HCT116 (cell line): ENCODE measurements at regions of chr19 and their contacts with region 1.

Region 1: GRCh38 chr19:9584073-9584833 is at the start of gene ZNF121:
- DNase-seq: peak; percentile 77
- ATAC-seq: peak; percentile 83
- H3K4me3 ChIP-seq: peak within 1 kb of the TSS; percentile 72 to 73
- H3K27ac ChIP-seq: peak within 1 kb of the TSS; percentile 79
- H3K4me1 ChIP-seq: peaks cover 3 to 9% of the 10 kb centered on the region in 2 experiments; a peak in 2 of 4 replicates
- H3K27me3 ChIP-seq: no peaks in the 10 kb centered on the region
- CTCF ChIP-seq: no peak
- POLR2A ChIP-seq: peak; percentile 56
- RAD21 ChIP-seq: no peak
- total RNA-seq, gene ZNF121: 80.9 TPM

Region 2: DNA sequence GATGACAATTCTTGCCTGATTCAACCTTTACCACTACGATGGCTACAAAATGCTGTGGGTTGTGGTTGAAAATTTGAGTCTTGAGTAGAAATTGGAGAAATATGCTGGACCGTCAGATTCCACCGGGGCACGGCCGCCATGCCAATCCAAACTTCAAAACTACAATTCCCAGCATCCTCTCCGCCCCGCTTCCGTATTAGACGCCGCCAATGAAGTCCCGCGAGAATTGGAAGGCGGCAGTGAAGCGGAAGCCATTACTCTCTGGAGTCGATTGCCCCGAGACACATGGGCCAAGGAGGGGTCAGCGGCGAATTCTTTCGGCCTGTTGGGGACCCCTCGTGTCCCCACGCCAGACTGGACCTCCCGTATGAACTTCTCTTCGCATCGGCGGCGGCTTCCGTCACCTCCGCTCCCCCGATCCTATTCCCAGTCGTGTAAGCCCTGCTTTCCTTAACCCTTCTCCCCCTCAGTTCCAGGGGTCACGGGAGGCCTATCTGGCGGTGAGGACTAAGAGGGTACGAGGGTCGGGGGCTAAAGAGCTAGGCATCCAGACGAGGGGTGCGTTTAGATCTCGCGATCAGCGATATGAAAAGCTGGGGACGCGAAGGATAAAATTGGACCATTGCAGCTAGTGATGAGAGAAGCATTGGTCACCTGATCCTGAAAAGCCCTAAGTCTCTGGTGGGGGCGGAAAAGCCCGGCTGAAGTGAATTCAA is 443.9 kb before region 1 on chr19 and contains the start of gene ZNF317:
- CTCF ChIA-PET with region 1: no interaction called
- POLR2A ChIA-PET with region 1: no interaction called
- RAD21 ChIA-PET with region 1: no interaction called
- intact Hi-C with region 1: loop called (anchors 5 kb)
- DNase-seq: peak; percentile 84
- ATAC-seq: peak; percentile 88
- H3K4me3 ChIP-seq: peak within 1 kb of the TSS; percentile 90 to 99
- H3K27ac ChIP-seq: peak within 1 kb of the TSS; percentile 54
- H3K4me1 ChIP-seq: peaks cover 4 to 9% of the 10 kb centered on the region in 2 experiments; a peak in 2 of 4 replicates
- H3K27me3 ChIP-seq: no peaks in the 10 kb centered on the region
- CTCF ChIP-seq: no peak
- POLR2A ChIP-seq: peak; percentile 64
- RAD21 ChIP-seq: no peak
- total RNA-seq, gene ZNF317: 39.8 TPM

Region 3: GRCh38 chr19:9323919-9324583 is 260.2 kb before region 1 on chr19 and contains the start of gene ZNF559:
- CTCF ChIA-PET with region 1: no interaction called
- POLR2A ChIA-PET with region 1: no interaction called
- RAD21 ChIA-PET with region 1: no interaction called
- intact Hi-C with region 1: loop called (anchors 10 kb)
- DNase-seq: peak; percentile 89
- ATAC-seq: peak; percentile 98
- H3K4me3 ChIP-seq: peak within 1 kb of the TSS; percentile 73 to 80
- H3K27ac ChIP-seq: peak within 1 kb of the TSS; percentile 80
- H3K4me1 ChIP-seq: peaks cover 0 to 16% of the 10 kb centered on the region in 2 experiments; a peak in 2 of 4 replicates
- H3K27me3 ChIP-seq: no peaks in the 10 kb centered on the region
- CTCF ChIP-seq: peak in 2 of 3 experiments; percentile 47 to 50; a peak in 4 of 6 replicates
- POLR2A ChIP-seq: no peak
- RAD21 ChIP-seq: no peak
- total RNA-seq, gene ZNF559: 10.9 TPM

Region 4: DNA sequence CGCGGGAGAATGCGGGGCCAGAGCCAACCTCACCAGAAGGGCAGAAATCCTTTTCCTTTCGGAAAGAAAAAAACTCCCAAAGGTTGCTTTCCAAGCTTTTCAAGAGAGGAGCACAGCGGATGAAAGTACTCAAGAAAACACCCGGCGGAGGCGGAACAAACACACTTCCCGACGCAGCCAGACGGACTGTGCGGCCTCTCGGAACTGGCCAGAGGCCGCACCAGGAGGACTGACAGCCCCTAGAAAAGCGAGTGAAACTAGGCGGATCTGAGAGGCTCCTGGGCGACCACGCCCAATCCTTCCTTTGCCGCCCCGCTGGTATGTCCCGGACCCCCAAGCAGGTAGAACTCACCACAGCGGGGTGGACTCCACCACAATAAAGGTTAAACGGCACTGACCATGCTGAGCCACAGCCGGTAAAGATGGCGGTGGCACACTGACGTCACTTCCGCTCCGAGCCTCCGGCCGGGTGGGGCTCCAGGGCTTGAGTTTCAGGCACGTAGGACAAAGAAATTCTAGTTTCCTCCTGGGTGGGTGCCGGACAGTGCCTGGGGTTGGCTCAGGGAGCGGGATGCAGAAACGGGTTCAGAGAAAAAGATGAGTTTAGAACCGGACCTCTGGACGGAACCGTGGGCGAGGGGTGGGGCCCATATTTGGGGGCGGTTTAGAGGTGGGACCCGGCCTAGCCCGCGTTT is 90.6 kb after region 1 on chr19 and contains the start of gene ZNF562:
- CTCF ChIA-PET with region 1: no interaction called
- POLR2A ChIA-PET with region 1: no interaction called
- RAD21 ChIA-PET with region 1: no interaction called
- intact Hi-C with region 1: loop called (anchors 10 kb)
- DNase-seq: peak; percentile 90
- ATAC-seq: peak; percentile 90
- H3K4me3 ChIP-seq: peak within 1 kb of the TSS; percentile 54 to 72
- H3K27ac ChIP-seq: peak within 1 kb of the TSS; percentile 95
- H3K4me1 ChIP-seq: peaks cover 2 to 12% of the 10 kb centered on the region in 2 experiments; a peak in 1 of 4 replicates
- H3K27me3 ChIP-seq: no peaks in the 10 kb centered on the region
- CTCF ChIP-seq: no peak
- POLR2A ChIP-seq: peak; percentile 51
- RAD21 ChIP-seq: no peak
- total RNA-seq, gene ZNF562: 37.8 TPM

Region 5: GRCh38 chr19:9877775-9878510 is 293.7 kb after region 1 on chr19:
- CTCF ChIA-PET with region 1: no interaction called
- POLR2A ChIA-PET with region 1: no interaction called
- RAD21 ChIA-PET with region 1: no interaction called
- intact Hi-C with region 1: no loop called
- DNase-seq: peak; percentile 58
- ATAC-seq: peak; percentile 84
- H3K4me3 ChIP-seq: peak overlapping the region in 1 of 2 experiments; percentile 19; a peak in 1 of 4 replicates
- H3K27ac ChIP-seq: peak overlapping the region; percentile 48; the same call in 1 of the 2 replicates
- H3K4me1 ChIP-seq: peaks cover 19 to 33% of the 10 kb centered on the region in 2 experiments
- H3K27me3 ChIP-seq: no peaks in the 10 kb centered on the region
- CTCF ChIP-seq: no peak
- POLR2A ChIP-seq: no peak
- RAD21 ChIP-seq: no peak

Region 6: GRCh38 chr19:9914315-9915207 is 330.3 kb after region 1 on chr19:
- CTCF ChIA-PET with region 1: no interaction called
- POLR2A ChIA-PET with region 1: no interaction called
- RAD21 ChIA-PET with region 1: no interaction called
- intact Hi-C with region 1: loop called (anchors 10 kb)
- DNase-seq: peak; percentile 53
- ATAC-seq: peak; percentile 87
- H3K4me3 ChIP-seq: peak overlapping the region; percentile 50 to 58
- H3K27ac ChIP-seq: peak overlapping the region; percentile 69
- H3K4me1 ChIP-seq: peaks cover 8 to 20% of the 10 kb centered on the region in 2 experiments; a peak in 3 of 4 replicates
- H3K27me3 ChIP-seq: no peaks in the 10 kb centered on the region
- CTCF ChIP-seq: peak; percentile 57 to 86 (median 63)
- POLR2A ChIP-seq: no peak
- RAD21 ChIP-seq: peak; percentile 67